ENCODE measurements at regions of chr7 and their contacts with region 1.

Region 1: GRCh38 chr7:55546829-55547228 is 25.5 kb downstream of the VOPP1 start:
- DNase-seq: no peak
- H3K4me3 ChIP-seq: no peak overlapping the region
- H3K27ac ChIP-seq: no peak overlapping the region
- H3K4me1 ChIP-seq: peaks cover 51% of the 10 kb centered on the region
- CTCF ChIP-seq: no peak

Region 2: DNA sequence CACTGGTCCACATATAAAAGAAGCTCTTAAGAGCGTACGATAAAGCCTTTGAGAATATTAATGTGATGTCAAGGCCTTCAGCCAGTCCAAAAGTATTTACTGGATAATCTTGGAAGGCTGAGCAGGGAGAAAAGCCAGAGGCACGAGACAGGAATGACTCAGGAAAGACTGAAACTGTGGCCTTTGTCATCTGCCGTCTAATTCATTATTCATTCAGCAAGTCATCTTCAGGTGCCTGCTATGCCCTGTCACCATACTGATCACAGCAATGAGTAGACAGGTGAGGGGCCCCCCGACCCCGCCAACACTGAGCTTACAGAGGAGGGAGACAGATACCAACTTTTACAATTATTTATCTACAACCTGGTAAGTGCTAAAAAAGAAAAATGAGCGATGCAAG is 53.4 kb before region 1 on chr7:
- CTCF ChIA-PET with region 1: no interaction called
- POLR2A ChIA-PET with region 1: no interaction called
- intact Hi-C with region 1: no loop called
- DNase-seq: no peak
- H3K4me3 ChIP-seq: no peak overlapping the region
- H3K27ac ChIP-seq: no peak overlapping the region
- H3K4me1 ChIP-seq: no peaks in the 10 kb centered on the region
- CTCF ChIP-seq: no peak

Region 3: GRCh38 chr7:55557666-55558188 is 10.9 kb after region 1 on chr7:
- CTCF ChIA-PET with region 1: interaction called, 3 read pairs
- POLR2A ChIA-PET with region 1: interaction called, 10 read pairs
- intact Hi-C with region 1: no loop called
- DNase-seq: peak; percentile 68
- H3K4me3 ChIP-seq: peak overlapping the region; percentile 48
- H3K27ac ChIP-seq: peak overlapping the region; percentile 73
- H3K4me1 ChIP-seq: peaks cover 83% of the 10 kb centered on the region
- CTCF ChIP-seq: no peak

Measured in OCI-LY7 (cell line).